CD8-positive, alpha-beta T cell (primary cell): ENCODE measurements at regions of chr7 and their contacts with region 1.

Region 1: GRCh38 chr7:105036217-105037168 is 22.5 kb downstream of the KMT2E start:
- DNase-seq: no peak
- ATAC-seq: no peak
- H3K4me3 ChIP-seq: no peak overlapping the region
- H3K4me3 Mint-ChIP-seq: no peak overlapping the region
- H3K27ac ChIP-seq: peak overlapping the region in 1 of 2 experiments; percentile 18
- H3K27ac Mint-ChIP-seq: peak overlapping the region; percentile 25
- H3K4me1 ChIP-seq: peaks cover 42% of the 10 kb centered on the region
- H3K4me1 Mint-ChIP-seq: peaks cover 66% of the 10 kb centered on the region
- H3K27me3 ChIP-seq: no peaks in the 10 kb centered on the region
- H3K27me3 Mint-ChIP-seq: no peaks in the 10 kb centered on the region
- CTCF ChIP-seq: no peak

Region 2: DNA sequence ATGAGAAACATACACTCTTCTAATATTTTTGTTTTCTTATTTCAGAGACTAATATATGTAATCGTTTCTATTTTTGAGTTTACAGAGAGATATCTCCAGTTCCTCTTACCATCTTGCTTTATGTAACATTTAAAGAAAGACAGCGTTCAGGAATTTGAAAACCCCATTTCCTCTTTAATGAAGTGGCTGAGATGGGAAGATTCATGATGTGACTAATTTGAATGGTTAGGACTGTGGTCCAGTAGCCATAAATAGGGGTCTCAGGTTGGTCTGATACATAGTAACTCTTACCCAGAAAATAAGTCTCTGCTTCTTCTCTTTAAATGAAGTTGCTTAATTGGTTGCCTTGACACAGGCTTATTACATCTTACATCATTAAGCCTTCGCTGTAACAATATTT is 15.6 kb before region 1 on chr7:
- CTCF ChIA-PET with region 1: interaction called, 6 read pairs
- POLR2A ChIA-PET with region 1: interaction called, 3 read pairs
- intact Hi-C with region 1: loop called (anchors 1 to 2 kb)
- DNase-seq: no peak
- ATAC-seq: no peak
- H3K4me3 ChIP-seq: no peak overlapping the region
- H3K4me3 Mint-ChIP-seq: peak overlapping the region; percentile 68
- H3K27ac ChIP-seq: peak overlapping the region in 1 of 2 experiments; percentile 1
- H3K27ac Mint-ChIP-seq: peak overlapping the region; percentile 32
- H3K4me1 ChIP-seq: peaks cover 75% of the 10 kb centered on the region
- H3K4me1 Mint-ChIP-seq: peaks cover 84% of the 10 kb centered on the region
- H3K27me3 ChIP-seq: no peaks in the 10 kb centered on the region
- H3K27me3 Mint-ChIP-seq: no peaks in the 10 kb centered on the region
- CTCF ChIP-seq: no peak